Panc1 (cell line): ENCODE measurements at regions of chrX and their contacts with region 1.

Region 1: GRCh38 chrX:97290199-97290598 is 406.5 kb downstream of the RPA4 start:
- DNase-seq: no peak
- ATAC-seq: no peak
- H3K4me3 ChIP-seq: no peak overlapping the region
- H3K27ac ChIP-seq: no peak overlapping the region
- H3K4me1 ChIP-seq: no peaks in the 10 kb centered on the region
- H3K27me3 ChIP-seq: no peaks in the 10 kb centered on the region
- CTCF ChIP-seq: no peak

Region 2: GRCh38 chrX:96906741-96907140 is 383.5 kb before region 1 on chrX:
- CTCF ChIA-PET with region 1: no interaction called
- POLR2A ChIA-PET with region 1: no interaction called
- in situ Hi-C with region 1: no loop called
- intact Hi-C with region 1: no loop called
- DNase-seq: no peak
- ATAC-seq: no peak
- H3K4me3 ChIP-seq: no peak overlapping the region
- H3K27ac ChIP-seq: no peak overlapping the region
- H3K4me1 ChIP-seq: no peaks in the 10 kb centered on the region
- H3K27me3 ChIP-seq: no peaks in the 10 kb centered on the region
- CTCF ChIP-seq: no peak

Region 3: GRCh38 chrX:97132654-97133415 is 157.4 kb before region 1 on chrX:
- CTCF ChIA-PET with region 1: no interaction called
- POLR2A ChIA-PET with region 1: no interaction called
- in situ Hi-C with region 1: no loop called
- intact Hi-C with region 1: no loop called
- DNase-seq: no peak
- ATAC-seq: no peak
- H3K4me3 ChIP-seq: no peak overlapping the region
- H3K27ac ChIP-seq: no peak overlapping the region
- H3K4me1 ChIP-seq: no peaks in the 10 kb centered on the region
- H3K27me3 ChIP-seq: no peaks in the 10 kb centered on the region
- CTCF ChIP-seq: no peak

Region 4: DNA sequence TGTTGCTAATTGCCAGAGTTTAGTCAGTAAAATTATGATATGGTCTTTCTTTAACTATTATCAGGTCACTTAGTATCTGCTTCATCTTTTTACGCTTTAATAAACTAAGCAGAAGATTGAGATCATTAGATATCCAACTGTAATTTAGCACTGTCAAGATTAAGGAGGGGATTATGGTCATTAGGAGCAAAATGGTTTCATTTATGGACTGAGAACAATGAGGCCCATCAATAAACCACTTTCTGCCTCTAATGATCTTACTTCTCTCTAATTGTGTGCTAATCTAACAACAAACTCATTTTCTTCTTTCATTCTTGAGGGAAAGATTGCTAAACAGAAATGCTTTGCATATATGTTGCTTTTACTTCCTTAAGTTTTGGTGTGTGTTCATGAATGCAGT is 66.1 kb before region 1 on chrX:
- CTCF ChIA-PET with region 1: no interaction called
- POLR2A ChIA-PET with region 1: no interaction called
- in situ Hi-C with region 1: no loop called
- intact Hi-C with region 1: no loop called
- DNase-seq: no peak
- ATAC-seq: no peak
- H3K4me3 ChIP-seq: no peak overlapping the region
- H3K27ac ChIP-seq: no peak overlapping the region
- H3K4me1 ChIP-seq: no peaks in the 10 kb centered on the region
- H3K27me3 ChIP-seq: no peaks in the 10 kb centered on the region
- CTCF ChIP-seq: no peak

Region 5: GRCh38 chrX:97315939-97316338 is 25.7 kb after region 1 on chrX:
- CTCF ChIA-PET with region 1: no interaction called
- POLR2A ChIA-PET with region 1: interaction called, 14 read pairs
- in situ Hi-C with region 1: no loop called
- intact Hi-C with region 1: no loop called
- DNase-seq: no peak
- ATAC-seq: no peak
- H3K4me3 ChIP-seq: no peak overlapping the region
- H3K27ac ChIP-seq: no peak overlapping the region
- H3K4me1 ChIP-seq: no peaks in the 10 kb centered on the region
- H3K27me3 ChIP-seq: no peaks in the 10 kb centered on the region
- CTCF ChIP-seq: peak; percentile 60